ENCODE measurements at regions of chr2 and their contacts with region 1.

Region 1: DNA sequence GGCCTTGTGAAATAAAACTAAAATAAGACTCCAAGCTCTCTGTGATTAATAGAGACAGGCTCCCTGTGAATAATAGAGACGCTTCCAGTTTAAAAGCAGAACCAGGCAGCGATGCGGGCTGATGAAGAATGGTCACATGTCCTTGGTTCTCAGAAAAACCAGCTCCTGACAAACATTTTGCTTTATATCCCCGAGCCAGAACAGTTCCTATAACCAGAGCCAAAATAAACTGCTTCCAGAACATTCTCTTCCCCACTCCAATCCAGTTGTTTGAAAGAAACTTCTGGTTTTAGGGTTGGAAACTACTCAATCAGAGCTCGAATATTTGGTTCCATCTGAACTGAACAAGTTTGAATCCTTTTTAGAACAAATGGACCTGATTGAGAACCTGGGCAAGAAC is 213.7 kb downstream of the TSN start:
- DNase-seq: no peak
- ATAC-seq: no peak
- H3K4me3 ChIP-seq: no peak overlapping the region
- H3K27ac ChIP-seq: no peak overlapping the region
- H3K4me1 ChIP-seq: no peaks in the 10 kb centered on the region
- H3K27me3 ChIP-seq: peaks cover 53% of the 10 kb centered on the region
- CTCF ChIP-seq: no peak

Region 2: DNA sequence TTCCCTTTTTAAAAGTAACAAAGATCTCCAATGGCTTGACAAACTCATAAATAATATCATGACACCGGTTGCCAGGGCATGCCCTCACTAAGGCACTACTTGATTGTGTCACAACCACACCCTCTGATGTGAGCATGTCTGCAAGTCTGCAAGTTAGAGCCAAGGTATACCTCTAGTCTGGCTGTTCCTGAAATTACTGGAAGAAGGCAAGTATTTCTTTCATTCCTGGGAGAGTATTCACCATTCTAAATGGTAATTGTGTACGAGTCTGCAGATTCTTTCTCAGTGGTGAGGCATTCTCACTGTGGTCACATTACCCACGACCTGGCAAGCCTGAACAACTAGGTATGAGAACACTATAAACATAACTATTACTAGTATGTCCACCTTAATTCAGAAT is 464.2 kb before region 1 on chr2:
- CTCF ChIA-PET with region 1: no interaction called
- POLR2A ChIA-PET with region 1: no interaction called
- intact Hi-C with region 1: no loop called
- DNase-seq: peak; percentile 73
- ATAC-seq: peak; percentile 27
- H3K4me3 ChIP-seq: no peak overlapping the region
- H3K27ac ChIP-seq: peak overlapping the region; percentile 23
- H3K4me1 ChIP-seq: peaks cover 46% of the 10 kb centered on the region
- H3K27me3 ChIP-seq: no peaks in the 10 kb centered on the region
- CTCF ChIP-seq: no peak

Region 3: DNA sequence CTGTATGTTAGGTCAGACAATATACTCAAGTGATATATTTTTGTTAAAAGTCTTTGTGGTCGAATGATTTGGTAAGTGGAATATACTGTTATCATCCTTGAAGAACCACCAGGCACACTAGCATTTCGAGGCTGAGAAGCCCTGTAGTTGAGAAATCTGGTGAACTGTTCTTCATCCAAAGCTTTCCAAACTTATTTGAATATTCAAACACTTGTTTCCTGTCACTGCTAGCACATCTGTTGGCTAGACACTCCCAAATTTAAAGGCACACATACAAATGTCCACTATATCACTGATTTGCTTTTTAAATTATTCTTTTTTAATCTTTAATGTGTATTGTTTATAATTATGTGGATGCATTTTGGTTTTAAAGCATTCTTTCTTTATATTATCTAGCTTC is 1814.0 kb after region 1 on chr2:
- CTCF ChIA-PET with region 1: no interaction called
- POLR2A ChIA-PET with region 1: interaction called, 15 read pairs
- intact Hi-C with region 1: no loop called
- DNase-seq: no peak
- ATAC-seq: no peak
- H3K4me3 ChIP-seq: no peak overlapping the region
- H3K27ac ChIP-seq: no peak overlapping the region
- H3K4me1 ChIP-seq: no peaks in the 10 kb centered on the region
- H3K27me3 ChIP-seq: no peaks in the 10 kb centered on the region
- CTCF ChIP-seq: no peak

Measured in PC-3 (cell line).